Dorsolateral prefrontal cortex (tissue), 120 donors: ENCODE measurements at regions of chr7 and their contacts with region 1.

Region 1: DNA sequence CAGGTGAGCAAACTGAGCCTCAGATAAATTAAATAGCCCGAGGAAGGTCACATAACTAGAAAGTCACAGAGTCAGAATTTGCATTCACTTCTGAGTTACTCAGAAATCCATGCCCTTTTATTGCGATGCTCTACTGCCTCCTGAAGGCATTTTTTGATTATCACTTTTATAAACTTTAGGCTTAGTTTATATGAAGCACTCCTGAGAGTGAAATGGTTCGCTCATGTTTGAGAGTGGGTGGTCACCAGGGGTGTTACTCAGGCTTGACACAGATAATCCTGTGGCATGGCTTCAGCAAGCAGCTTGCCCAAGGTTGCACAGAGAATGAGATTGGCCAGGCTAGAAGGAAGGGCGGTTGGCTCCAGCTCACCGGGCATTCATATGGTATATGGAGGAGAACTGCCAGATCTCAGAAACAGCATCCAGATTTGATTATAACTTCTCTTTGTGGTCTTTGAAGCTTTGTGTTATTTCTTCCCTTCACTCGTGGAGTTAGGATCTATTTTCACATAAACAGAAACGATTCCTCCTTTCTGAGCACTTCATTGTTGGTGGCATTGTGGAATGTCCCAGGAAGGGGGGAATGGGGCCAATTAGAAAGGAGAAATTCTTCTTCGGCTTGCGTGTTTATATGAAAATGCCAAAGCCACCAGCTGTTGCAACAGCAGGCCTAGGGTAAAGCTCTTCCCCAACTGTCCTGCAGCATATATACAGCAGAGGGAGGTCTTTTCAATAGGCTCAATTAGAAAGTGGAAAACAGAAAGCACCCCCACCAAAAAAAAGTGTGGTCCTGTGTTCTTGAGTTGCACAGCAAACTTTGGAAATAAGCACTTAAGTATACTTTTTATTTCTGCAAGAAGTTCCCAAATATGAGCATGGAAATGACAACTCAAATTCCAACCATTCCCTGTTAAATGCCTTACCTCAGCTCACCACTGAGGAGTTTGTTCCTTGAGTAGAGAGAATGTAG is 628.8 kb downstream of the SUGCT start:
- DNase-seq: no peak
- H3K4me3 ChIP-seq: no peak overlapping the region
- H3K27ac ChIP-seq: no peak overlapping the region
- H3K27me3 ChIP-seq: peaks cover 0 to 6% (median 0%) of the 10 kb centered on the region in 45 donors
- CTCF ChIP-seq: peak in 42 of 56 donors; percentile 10 to 58 (median 28)

Region 2: GRCh38 chr7:40604601-40605438 is 158.8 kb before region 1 on chr7:
- intact Hi-C with region 1: loop called in 1 of 2 experiments (anchors 5 kb)
- DNase-seq: peak in 9 of 10 donors; percentile 12 to 72 (median 43)
- H3K4me3 ChIP-seq: no peak overlapping the region
- H3K27ac ChIP-seq: no peak overlapping the region
- H3K27me3 ChIP-seq: no peaks in the 10 kb centered on the region
- CTCF ChIP-seq: peak in 54 of 56 donors; percentile 20 to 80 (median 64)